ENCODE measurements at regions of chrX and their contacts with region 1.

Region 1: DNA sequence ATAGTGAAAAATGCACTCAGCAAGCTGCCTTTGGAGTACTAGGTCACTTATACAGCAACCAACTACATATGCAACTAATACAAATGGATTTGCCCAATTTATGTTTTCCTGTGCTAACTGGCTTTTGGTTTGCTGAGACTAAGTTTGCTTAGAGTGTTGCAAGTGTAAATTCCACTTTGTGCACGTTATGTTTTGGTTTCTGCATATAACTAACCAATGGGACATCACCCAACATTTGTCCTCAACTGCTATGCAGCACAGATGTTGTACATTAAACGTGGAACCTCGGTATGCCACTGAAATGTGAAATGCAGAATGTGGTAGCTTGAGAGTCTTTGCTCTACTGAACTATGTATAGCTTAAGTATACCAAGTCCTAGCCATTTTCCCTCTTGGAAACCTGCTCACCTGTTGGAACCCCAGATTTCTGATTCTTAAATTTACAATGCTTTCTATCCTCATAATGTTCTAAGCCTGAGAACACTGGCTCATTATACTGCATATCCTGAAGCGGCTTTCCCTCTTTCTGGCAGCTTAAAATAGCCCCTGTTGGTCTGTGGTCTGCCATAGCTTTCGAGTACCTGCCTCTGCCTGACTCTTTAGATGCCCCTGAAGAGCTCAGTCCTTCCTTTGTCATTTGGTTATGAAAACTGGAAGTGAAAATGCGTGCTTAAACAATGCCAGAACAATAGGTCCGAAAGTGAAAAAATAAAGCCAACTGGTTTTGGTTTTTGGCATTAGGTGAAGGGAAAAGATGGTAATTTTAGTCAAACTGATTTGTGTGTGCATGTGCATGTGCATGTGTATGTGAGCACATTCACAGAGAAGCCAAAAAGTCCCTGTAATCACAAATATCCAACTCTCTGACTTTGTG is 158.0 kb downstream of the SH2D1A start:
- DNase-seq: no peak
- H3K4me3 ChIP-seq: no peak overlapping the region
- H3K27ac ChIP-seq: no peak overlapping the region
- H3K4me1 ChIP-seq: no peaks in the 10 kb centered on the region
- H3K27me3 ChIP-seq: peaks cover 0 to 4% of the 10 kb centered on the region in 2 donors
- CTCF ChIP-seq: no peak
- POLR2A ChIP-seq: no peak

Region 2: DNA sequence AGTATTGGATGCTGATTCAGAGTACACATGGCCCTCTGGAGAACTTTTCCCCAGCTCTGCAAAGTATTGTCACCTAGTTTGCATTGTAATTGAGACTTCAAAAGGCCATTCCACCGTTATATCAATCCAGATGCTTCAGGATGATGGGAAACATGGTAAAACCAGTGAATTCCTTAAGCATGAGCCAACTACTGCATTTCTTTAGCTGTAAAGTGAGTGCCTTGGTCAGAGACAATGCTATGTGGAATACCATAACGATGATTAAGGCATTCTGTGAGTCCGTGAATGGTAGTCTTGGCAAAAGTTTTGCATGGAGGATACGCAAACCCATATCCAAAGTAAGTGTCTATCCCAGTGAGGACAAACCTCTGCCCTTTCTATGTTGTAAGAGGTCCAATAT is 1306.5 kb after region 1 on chrX:
- intact Hi-C with region 1: loop called (anchors 5 kb)
- DNase-seq: no peak
- H3K4me3 ChIP-seq: no peak overlapping the region
- H3K27ac ChIP-seq: no peak overlapping the region
- H3K4me1 ChIP-seq: no peaks in the 10 kb centered on the region
- H3K27me3 ChIP-seq: no peaks in the 10 kb centered on the region
- CTCF ChIP-seq: no peak
- POLR2A ChIP-seq: no peak